BJ (cell line): ENCODE measurements at regions of chr1 and their contacts with region 1.

Region 1: DNA sequence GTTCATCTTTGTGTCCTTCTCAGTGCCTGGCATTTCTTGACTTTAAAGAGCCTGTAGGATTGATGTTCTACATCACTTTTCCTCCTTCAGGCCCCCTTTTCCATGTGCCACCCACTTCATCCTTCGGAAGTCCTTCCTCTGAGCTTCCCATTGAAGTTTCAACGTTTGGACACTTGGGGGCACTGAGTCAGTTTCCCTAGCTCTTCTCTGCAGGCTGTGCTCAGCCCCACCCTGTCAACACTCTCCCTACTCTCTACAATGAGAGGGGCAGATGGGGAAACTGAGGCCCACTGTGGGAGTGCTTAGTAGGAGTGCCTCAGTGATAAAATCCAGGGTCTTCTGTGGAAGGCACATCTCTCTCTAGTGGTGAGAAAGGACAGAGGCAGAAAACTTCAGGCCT is 11.9 kb downstream of the KCNJ10 start:
- DNase-seq: no peak
- H3K4me3 ChIP-seq: no peak overlapping the region
- H3K27me3 ChIP-seq: peaks cover 27% of the 10 kb centered on the region
- CTCF ChIP-seq: peak; percentile 50

Region 2: GRCh38 chr1:160078512-160079195 is 20.6 kb after region 1 on chr1:
- CTCF ChIA-PET with region 1: interaction called, 38 read pairs
- POLR2A ChIA-PET with region 1: no interaction called
- DNase-seq: no peak
- H3K4me3 ChIP-seq: no peak overlapping the region
- H3K27me3 ChIP-seq: peaks cover 37% of the 10 kb centered on the region
- CTCF ChIP-seq: peak; percentile 84